ENCODE measurements at regions of chr2 and their contacts with region 1.

Region 1: GRCh38 chr2:218257390-218257981 is 3.3 kb upstream of the GPBAR1 start:
- DNase-seq: peak in 1 of 2 experiments; percentile 94
- H3K4me3 ChIP-seq: no peak overlapping the region
- H3K27ac ChIP-seq: no peak overlapping the region
- H3K4me1 ChIP-seq: peaks cover 3 to 21% (median 15%) of the 10 kb centered on the region in 4 experiments
- H3K27me3 ChIP-seq: no peaks in the 10 kb centered on the region
- CTCF ChIP-seq: peak in 2 of 3 experiments; percentile 76; a peak in 3 of 4 replicates
- EP300 ChIP-seq: no peak
- POLR2A ChIP-seq: no peak
- RAD21 ChIP-seq: peak; percentile 51 to 60

Region 2: DNA sequence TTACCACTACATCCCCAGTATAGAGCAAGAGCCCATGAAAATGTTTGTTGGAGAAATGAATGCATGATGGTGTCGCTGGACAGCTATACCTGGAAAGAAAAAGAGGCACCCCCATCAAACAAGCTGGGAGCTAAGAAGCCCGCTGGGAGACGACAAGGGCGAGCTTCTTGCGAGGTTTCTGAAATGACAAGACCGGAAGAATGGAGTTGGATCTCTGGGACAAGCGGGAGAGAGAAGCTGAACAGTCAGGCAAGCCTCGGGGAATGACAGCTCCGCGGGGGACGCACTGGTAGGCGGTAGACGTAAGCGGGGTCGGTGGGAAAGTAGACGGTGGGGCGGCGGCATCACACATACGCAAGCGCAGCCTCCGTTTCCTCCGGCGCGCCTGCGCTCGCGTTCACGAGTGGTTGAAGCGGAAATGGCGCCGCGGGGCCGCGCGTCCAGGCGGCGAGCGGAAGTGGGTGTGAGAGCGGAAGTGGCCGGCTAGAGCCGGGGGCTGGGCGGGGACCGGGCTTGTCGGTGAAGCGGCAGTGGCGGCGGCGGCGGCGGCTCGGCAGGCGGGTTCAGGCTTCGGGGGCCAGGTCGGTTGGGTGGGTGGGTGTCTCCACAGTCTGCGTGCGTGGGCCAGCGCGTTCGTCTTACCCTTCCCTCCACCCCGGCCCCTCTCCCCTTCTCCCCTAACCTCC is 40.7 kb before region 1 on chr2 and contains the start of gene ARPC2:
- CTCF ChIA-PET with region 1: interaction called, 7 read pairs
- POLR2A ChIA-PET with region 1: interaction called, 12 read pairs
- DNase-seq: peak; percentile 68 to 91
- H3K4me3 ChIP-seq: peak within 1 kb of the TSS; percentile 87 to 95 (median 92)
- H3K27ac ChIP-seq: peak within 1 kb of the TSS; percentile 69
- H3K4me1 ChIP-seq: peaks cover 0 to 10% (median 3%) of the 10 kb centered on the region in 4 experiments; a peak in 3 of 7 replicates
- H3K27me3 ChIP-seq: no peaks in the 10 kb centered on the region
- CTCF ChIP-seq: no peak
- EP300 ChIP-seq: no peak
- POLR2A ChIP-seq: peak in 1 of 2 experiments; percentile 79; a peak in 2 of 3 replicates
- RAD21 ChIP-seq: no peak
- total RNA-seq, gene ARPC2: 195 and 198 TPM in 2 replicates

Measured in H1 (cell line).